ENCODE measurements at regions of chr19 and their contacts with region 1.

Region 1: GRCh38 chr19:55653758-55654539 is 886 bp upstream of the U2AF2 start:
- DNase-seq: peak; percentile 98
- H3K4me3 ChIP-seq: peak overlapping the region; percentile 46 to 67 (median 60)
- H3K27ac ChIP-seq: peak overlapping the region; percentile 90
- H3K4me1 ChIP-seq: peaks cover 17% of the 10 kb centered on the region
- H3K27me3 ChIP-seq: no peaks in the 10 kb centered on the region
- CTCF ChIP-seq: peak; percentile 99 to 100

Region 2: DNA sequence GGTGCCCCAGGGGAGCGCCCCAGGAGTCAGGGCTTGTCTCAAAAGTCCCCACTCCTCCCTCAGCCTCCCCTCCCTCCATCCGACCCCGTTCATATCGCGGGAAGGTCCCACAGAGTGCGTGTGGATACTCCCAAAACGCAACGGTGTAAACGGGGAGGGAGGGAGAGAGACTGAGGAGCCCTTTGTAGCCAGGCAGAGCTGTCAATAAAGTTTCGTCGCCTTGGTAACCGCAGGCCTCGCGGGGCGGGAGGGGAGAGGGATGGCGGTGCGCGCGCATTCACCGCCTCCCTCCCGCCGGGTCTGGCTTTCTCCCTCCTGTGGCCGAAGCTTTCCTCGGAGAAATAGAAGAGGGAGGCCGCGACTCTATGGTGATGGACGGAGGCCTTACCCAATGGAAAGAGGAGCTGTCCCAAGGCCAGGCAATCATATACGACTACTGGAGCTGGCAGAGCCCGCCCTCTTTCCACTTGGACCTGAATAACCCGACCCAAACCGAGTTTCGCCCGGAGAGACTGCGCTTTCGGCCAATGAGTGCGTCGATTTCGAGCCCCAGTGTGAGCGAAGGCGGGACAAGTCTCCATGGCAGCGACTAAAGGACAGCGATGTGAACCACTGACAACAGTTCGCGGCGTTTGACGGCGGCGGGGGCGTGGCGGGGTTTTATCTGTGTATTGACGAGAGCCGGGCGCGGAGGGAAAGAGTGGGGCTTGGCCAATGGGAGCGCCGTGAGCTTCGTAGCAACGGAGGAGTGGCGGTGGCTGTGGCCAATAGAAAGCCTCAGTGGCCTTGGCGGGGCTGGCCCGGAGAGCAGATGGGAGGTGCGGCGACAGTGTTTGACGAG is 314.7 kb before region 1 on chr19 and contains the start of gene KMT5C:
- CTCF ChIA-PET with region 1: no interaction called
- dilution Hi-C with region 1: no loop called
- in situ Hi-C with region 1: no loop called
- intact Hi-C with region 1: loop called (anchors 10 kb)
- DNase-seq: peak; percentile 100
- H3K4me3 ChIP-seq: peak within 1 kb of the TSS; percentile 48 to 83 (median 61)
- H3K27ac ChIP-seq: peak within 1 kb of the TSS; percentile 99
- H3K4me1 ChIP-seq: peaks cover 48% of the 10 kb centered on the region
- H3K27me3 ChIP-seq: no peaks in the 10 kb centered on the region
- CTCF ChIP-seq: peak in 1 of 2 donors; percentile 46
- total RNA-seq, gene KMT5C: 15.6 to 18.8 TPM

Region 3: DNA sequence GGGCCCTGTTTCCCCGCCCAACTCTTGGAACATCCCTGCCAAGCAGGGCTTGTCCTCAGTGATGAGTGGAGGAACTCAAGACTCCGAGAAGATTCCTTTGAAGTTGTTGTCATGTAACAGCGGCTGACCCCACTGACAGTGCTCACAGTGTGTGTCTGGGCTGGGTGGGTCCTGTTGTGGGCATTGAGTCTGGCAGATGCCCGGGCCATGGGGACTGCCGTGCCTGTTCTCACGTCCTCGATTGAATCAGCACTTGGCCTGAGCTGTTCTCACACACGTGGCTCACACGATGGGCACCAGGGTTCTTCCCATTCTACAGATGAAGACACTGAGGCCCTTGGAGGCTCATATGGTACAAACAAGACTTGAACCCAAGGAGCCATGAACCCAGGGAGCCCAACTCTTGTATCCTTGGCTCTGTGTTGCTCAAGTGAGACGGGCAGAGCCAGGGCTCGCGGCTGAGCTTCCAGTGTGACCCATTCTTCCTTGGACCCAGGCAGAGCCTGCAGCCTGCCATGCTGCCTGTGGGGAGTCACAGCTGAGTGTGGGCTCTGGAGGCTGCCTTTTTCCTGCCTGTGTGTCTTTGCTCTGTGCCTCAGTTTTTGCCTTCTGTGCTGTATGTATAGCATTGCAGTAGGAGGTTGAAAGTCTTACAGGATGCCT is 12.5 kb after region 1 on chr19:
- CTCF ChIA-PET with region 1: interaction called, 11 read pairs
- dilution Hi-C with region 1: no loop called
- in situ Hi-C with region 1: no loop called
- intact Hi-C with region 1: loop called (anchors 1 kb)
- DNase-seq: no peak
- H3K4me3 ChIP-seq: no peak overlapping the region
- H3K27ac ChIP-seq: no peak overlapping the region
- H3K4me1 ChIP-seq: peaks cover 11% of the 10 kb centered on the region
- H3K27me3 ChIP-seq: no peaks in the 10 kb centered on the region
- CTCF ChIP-seq: no peak

Region 4: GRCh38 chr19:55674841-55675660 is 21.1 kb after region 1 on chr19 and contains the start of gene EPN1:
- CTCF ChIA-PET with region 1: interaction called, 3 read pairs
- dilution Hi-C with region 1: no loop called
- in situ Hi-C with region 1: no loop called
- intact Hi-C with region 1: loop called (anchors 1 kb)
- DNase-seq: peak; percentile 95
- H3K4me3 ChIP-seq: peak within 1 kb of the TSS; percentile 77 to 87 (median 78)
- H3K27ac ChIP-seq: peak within 1 kb of the TSS; percentile 69
- H3K4me1 ChIP-seq: peaks cover 31% of the 10 kb centered on the region
- H3K27me3 ChIP-seq: no peaks in the 10 kb centered on the region
- CTCF ChIP-seq: no peak
- total RNA-seq, gene EPN1: 47.0 to 135 TPM